Sigmoid colon (tissue), 7 donors: ENCODE measurements at regions of chr20 and their contacts with region 1.

Region 1: GRCh38 chr20:3000852-3001523 is 42.4 kb upstream of the GNRH2 start:
- DNase-seq: no peak
- H3K4me3 ChIP-seq: no peak overlapping the region
- H3K27ac ChIP-seq: no peak overlapping the region
- H3K4me1 ChIP-seq: no peaks in the 10 kb centered on the region
- H3K27me3 ChIP-seq: no peaks in the 10 kb centered on the region
- CTCF ChIP-seq: peak in 3 of 4 experiments; percentile 13 to 38 (median 31)
- EP300 ChIP-seq: no peak
- POLR2A ChIP-seq: no peak

Region 2: GRCh38 chr20:2752567-2753460 is 248.2 kb before region 1 on chr20:
- intact Hi-C with region 1: loop called (anchors 5 kb)
- DNase-seq: peak; percentile 68
- H3K4me3 ChIP-seq: peak overlapping the region; percentile 23 to 47 (median 42)
- H3K27ac ChIP-seq: no peak overlapping the region
- H3K4me1 ChIP-seq: peaks cover 0 to 37% (median 31%) of the 10 kb centered on the region in 4 donors
- H3K27me3 ChIP-seq: peaks cover 3 to 57% (median 40%) of the 10 kb centered on the region in 3 donors
- CTCF ChIP-seq: peak in 3 of 4 experiments; percentile 30 to 46 (median 38)
- EP300 ChIP-seq: no peak
- POLR2A ChIP-seq: no peak

Region 3: GRCh38 chr20:2873010-2873746 is 127.8 kb before region 1 on chr20 and contains the start of gene PTPRA:
- intact Hi-C with region 1: loop called (anchors 5 kb)
- DNase-seq: peak; percentile 95
- H3K4me3 ChIP-seq: peak within 1 kb of the TSS; percentile 88 to 98 (median 94)
- H3K27ac ChIP-seq: peak within 1 kb of the TSS; percentile 78 to 91 (median 86)
- H3K4me1 ChIP-seq: peaks cover 0 to 44% (median 31%) of the 10 kb centered on the region in 4 donors
- H3K27me3 ChIP-seq: peaks cover 0 to 14% (median 0%) of the 10 kb centered on the region in 3 donors
- CTCF ChIP-seq: no peak
- EP300 ChIP-seq: no peak
- POLR2A ChIP-seq: peak; percentile 49
- total RNA-seq, gene PTPRA: 62.0 to 86.4 (median 73.6) TPM